ENCODE measurements at regions of chr10 and their contacts with region 1.

Region 1: GRCh38 chr10:49592726-49593563 is 17.2 kb upstream of the SLC18A3 start:
- DNase-seq: peak; percentile 73
- ATAC-seq: peak; percentile 51
- H3K4me3 Mint-ChIP-seq: no peak overlapping the region
- H3K27ac Mint-ChIP-seq: no peak overlapping the region
- H3K4me1 Mint-ChIP-seq: peaks cover 2% of the 10 kb centered on the region
- H3K27me3 Mint-ChIP-seq: peaks cover 12% of the 10 kb centered on the region

Region 2: GRCh38 chr10:49538381-49539319 is 54.3 kb before region 1 on chr10 and contains the start of gene ERCC6:
- CTCF ChIA-PET with region 1: interaction called, 10 read pairs
- POLR2A ChIA-PET with region 1: interaction called, 3 read pairs
- DNase-seq: peak; percentile 98
- ATAC-seq: peak; percentile 98
- H3K4me3 Mint-ChIP-seq: peak within 1 kb of the TSS; percentile 90
- H3K27ac Mint-ChIP-seq: peak within 1 kb of the TSS; percentile 91
- H3K4me1 Mint-ChIP-seq: peaks cover 41% of the 10 kb centered on the region
- H3K27me3 Mint-ChIP-seq: peaks cover 9% of the 10 kb centered on the region
- total RNA-seq, gene ERCC6: 20.5 to 20.6 TPM

Region 3: DNA sequence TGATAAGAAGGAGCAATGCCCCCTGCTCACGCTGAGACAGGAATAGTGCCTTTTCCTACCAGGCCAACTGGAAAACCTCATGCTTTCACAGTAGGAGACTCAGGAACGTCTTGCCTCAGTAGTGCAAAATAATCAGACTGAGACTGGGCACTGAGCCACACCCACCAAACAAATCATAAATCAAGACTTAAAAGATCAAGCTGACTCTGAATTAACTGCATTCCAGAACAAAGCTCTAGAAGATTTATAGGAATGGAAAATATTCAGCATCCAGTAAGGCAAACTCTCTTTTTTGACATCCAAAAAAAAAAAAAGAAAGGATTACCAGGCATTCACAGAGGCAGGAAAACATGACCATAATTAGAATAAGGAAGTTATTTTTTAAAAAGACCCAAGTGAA is 13.3 kb before region 1 on chr10:
- CTCF ChIA-PET with region 1: interaction called, 15 read pairs
- POLR2A ChIA-PET with region 1: no interaction called
- DNase-seq: no peak
- ATAC-seq: no peak
- H3K4me3 Mint-ChIP-seq: no peak overlapping the region
- H3K27ac Mint-ChIP-seq: no peak overlapping the region
- H3K4me1 Mint-ChIP-seq: peaks cover 6% of the 10 kb centered on the region
- H3K27me3 Mint-ChIP-seq: peaks cover 12% of the 10 kb centered on the region

Region 4: GRCh38 chr10:50224330-50224952 is 631.5 kb after region 1 on chr10:
- CTCF ChIA-PET with region 1: interaction called, 12 read pairs
- POLR2A ChIA-PET with region 1: no interaction called
- DNase-seq: peak; percentile 48
- ATAC-seq: peak; percentile 67
- H3K4me3 Mint-ChIP-seq: no peak overlapping the region
- H3K27ac Mint-ChIP-seq: no peak overlapping the region
- H3K4me1 Mint-ChIP-seq: no peaks in the 10 kb centered on the region
- H3K27me3 Mint-ChIP-seq: peaks cover 31% of the 10 kb centered on the region

Measured in activated CD8-positive, alpha-beta T cell treated with anti-CD3 and anti-CD28 coated beads, Interleukin-2, amount 10 ng/mL, durations not matched to agents 7 days and 5 days (primary cell).